ENCODE measurements at regions of chr12 and their contacts with region 1.

Region 1: GRCh38 chr12:85676816-85677749 is 159.1 kb downstream of the RASSF9 start:
- DNase-seq: no peak
- H3K4me3 Mint-ChIP-seq: no peak overlapping the region
- H3K27ac Mint-ChIP-seq: no peak overlapping the region
- H3K4me1 Mint-ChIP-seq: no peaks in the 10 kb centered on the region
- H3K27me3 Mint-ChIP-seq: no peaks in the 10 kb centered on the region
- CTCF ChIP-seq: no peak

Region 2: GRCh38 chr12:85626001-85626781 is 50.9 kb before region 1 on chr12:
- CTCF ChIA-PET with region 1: no interaction called
- intact Hi-C with region 1: loop called (anchors 5 kb)
- DNase-seq: peak; percentile 28
- H3K4me3 Mint-ChIP-seq: peak overlapping the region; percentile 24
- H3K27ac Mint-ChIP-seq: peak overlapping the region; percentile 97
- H3K4me1 Mint-ChIP-seq: peaks cover 31% of the 10 kb centered on the region
- H3K27me3 Mint-ChIP-seq: no peaks in the 10 kb centered on the region
- CTCF ChIP-seq: no peak

Region 3: GRCh38 chr12:85697003-85697402 is 19.9 kb after region 1 on chr12:
- CTCF ChIA-PET with region 1: no interaction called
- intact Hi-C with region 1: no loop called
- DNase-seq: no peak
- H3K4me3 Mint-ChIP-seq: no peak overlapping the region
- H3K27ac Mint-ChIP-seq: no peak overlapping the region
- H3K4me1 Mint-ChIP-seq: peaks cover 23% of the 10 kb centered on the region
- H3K27me3 Mint-ChIP-seq: no peaks in the 10 kb centered on the region
- CTCF ChIP-seq: no peak

Region 4: DNA sequence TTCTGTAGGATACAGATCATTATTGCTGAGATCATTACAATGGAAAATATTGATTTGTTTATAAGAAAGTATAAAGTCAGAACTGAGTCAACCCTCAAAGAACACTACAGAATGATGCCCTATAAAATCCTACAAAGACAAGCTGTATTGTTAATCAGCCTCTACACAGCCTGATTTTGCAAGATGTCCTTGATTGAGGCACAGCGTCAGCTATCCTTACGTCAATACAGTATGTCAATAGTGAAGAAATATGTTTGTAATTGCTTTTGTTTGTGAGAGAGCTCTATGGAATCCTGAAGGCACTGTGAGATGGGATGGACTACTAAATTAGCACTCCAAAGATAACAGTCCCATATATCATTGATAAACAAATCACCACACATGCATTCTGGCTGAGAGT is 88.4 kb after region 1 on chr12:
- CTCF ChIA-PET with region 1: no interaction called
- intact Hi-C with region 1: no loop called
- DNase-seq: no peak
- H3K4me3 Mint-ChIP-seq: no peak overlapping the region
- H3K27ac Mint-ChIP-seq: no peak overlapping the region
- H3K4me1 Mint-ChIP-seq: no peaks in the 10 kb centered on the region
- H3K27me3 Mint-ChIP-seq: no peaks in the 10 kb centered on the region
- CTCF ChIP-seq: no peak

Region 5: GRCh38 chr12:85823436-85824180 is 146.5 kb after region 1 on chr12:
- CTCF ChIA-PET with region 1: no interaction called
- intact Hi-C with region 1: loop called (anchors 5 kb)
- DNase-seq: peak; percentile 24
- H3K4me3 Mint-ChIP-seq: peak overlapping the region; percentile 32
- H3K27ac Mint-ChIP-seq: peak overlapping the region; percentile 71
- H3K4me1 Mint-ChIP-seq: peaks cover 63% of the 10 kb centered on the region
- H3K27me3 Mint-ChIP-seq: no peaks in the 10 kb centered on the region
- CTCF ChIP-seq: no peak